Naive thymus-derived CD8-positive, alpha-beta T cell (primary cell): ENCODE measurements at regions of chr2 and their contacts with region 1.

Region 1: DNA sequence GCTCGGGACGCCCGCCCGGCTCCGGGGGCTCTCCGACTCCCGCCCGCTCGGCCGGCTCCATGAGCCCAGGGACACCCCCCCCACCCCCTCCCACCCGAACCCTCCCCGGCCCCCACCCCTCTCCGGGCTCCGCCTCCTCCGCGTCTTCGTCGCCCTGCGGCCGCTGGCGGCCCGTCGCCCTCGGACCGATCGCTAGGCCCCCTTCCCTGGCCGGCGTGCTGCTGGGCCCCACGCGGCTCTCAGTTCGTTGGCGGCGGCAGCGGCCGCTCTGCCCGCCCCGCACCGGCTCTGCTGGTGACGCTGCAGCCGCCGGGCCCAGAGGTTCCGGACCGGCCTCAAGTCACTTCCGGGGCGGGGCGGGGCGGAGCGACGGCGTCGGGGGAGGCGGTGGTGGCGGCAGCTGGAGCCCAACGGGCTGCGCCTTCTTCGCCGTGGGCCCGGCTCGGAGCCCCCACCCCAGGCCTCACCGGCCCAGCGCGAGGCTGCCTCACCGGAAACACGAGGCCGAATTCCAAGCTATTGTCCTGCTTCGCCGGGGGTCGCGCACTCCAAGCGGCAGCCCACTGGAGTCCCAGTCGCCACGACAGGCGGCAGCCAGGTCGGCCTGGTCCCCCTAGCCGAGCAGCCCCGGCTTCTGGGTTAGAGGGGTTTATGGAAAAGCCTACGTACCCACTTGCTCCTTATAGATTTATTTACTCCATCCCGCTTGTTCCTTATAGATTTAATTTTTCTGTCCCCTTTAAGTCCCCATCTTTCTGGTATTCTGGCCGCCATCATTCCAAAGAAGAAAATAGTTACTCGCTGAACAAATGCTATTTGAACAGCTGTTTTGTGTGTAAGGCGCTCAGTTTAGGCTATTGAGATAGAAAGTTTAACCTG is at the start of gene PSME4:
- DNase-seq: peak; percentile 86 to 96 (median 91)
- ATAC-seq: peak; percentile 89 to 90
- H3K4me3 Mint-ChIP-seq: peak within 1 kb of the TSS; percentile 86 to 100 (median 96)
- H3K27ac Mint-ChIP-seq: peak within 1 kb of the TSS; percentile 88 to 99 (median 96)
- H3K4me1 Mint-ChIP-seq: peaks cover 34 to 67% (median 61%) of the 10 kb centered on the region in 4 donors
- H3K27me3 Mint-ChIP-seq: no peaks in the 10 kb centered on the region
- polyA plus RNA-seq, gene PSME4: 3.5 to 4.3 (median 3.8) TPM

Region 2: DNA sequence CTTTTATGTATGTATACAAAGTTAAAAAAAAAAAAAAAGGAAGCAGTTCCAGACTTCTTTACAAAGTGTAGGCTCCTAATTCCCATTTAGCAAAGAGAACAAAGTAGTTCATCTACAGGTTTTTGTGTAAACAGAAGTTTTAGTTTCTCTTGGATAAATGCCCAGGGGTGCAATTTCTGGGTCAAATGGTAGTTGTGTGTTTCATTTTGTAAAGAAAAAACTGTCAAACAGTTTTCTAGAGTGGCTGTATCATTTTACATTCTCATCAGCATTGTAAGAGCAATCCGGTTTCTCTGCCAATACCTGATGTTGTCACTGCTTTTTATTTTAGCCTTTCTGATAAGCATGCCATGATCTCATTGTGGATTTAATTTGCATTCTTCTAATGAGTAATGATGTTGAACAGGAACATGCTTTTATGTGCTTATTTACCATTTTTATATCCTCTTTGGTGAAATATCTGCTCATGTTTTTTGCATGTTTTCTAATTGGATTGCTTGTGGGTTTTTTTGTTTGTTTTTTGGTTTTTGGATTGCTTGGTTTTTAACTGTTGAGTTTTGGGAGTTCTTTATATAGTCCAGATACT is 16.5 kb after region 1 on chr2:
- POLR2A ChIA-PET with region 1: interaction called, 11 read pairs
- DNase-seq: no peak
- ATAC-seq: no peak
- H3K4me3 Mint-ChIP-seq: peak overlapping the region in 1 of 10 donors; percentile 12
- H3K27ac Mint-ChIP-seq: peak overlapping the region; percentile 37 to 91 (median 81)
- H3K4me1 Mint-ChIP-seq: peaks cover 13 to 40% (median 35%) of the 10 kb centered on the region in 4 donors
- H3K27me3 Mint-ChIP-seq: no peaks in the 10 kb centered on the region

Region 3: DNA sequence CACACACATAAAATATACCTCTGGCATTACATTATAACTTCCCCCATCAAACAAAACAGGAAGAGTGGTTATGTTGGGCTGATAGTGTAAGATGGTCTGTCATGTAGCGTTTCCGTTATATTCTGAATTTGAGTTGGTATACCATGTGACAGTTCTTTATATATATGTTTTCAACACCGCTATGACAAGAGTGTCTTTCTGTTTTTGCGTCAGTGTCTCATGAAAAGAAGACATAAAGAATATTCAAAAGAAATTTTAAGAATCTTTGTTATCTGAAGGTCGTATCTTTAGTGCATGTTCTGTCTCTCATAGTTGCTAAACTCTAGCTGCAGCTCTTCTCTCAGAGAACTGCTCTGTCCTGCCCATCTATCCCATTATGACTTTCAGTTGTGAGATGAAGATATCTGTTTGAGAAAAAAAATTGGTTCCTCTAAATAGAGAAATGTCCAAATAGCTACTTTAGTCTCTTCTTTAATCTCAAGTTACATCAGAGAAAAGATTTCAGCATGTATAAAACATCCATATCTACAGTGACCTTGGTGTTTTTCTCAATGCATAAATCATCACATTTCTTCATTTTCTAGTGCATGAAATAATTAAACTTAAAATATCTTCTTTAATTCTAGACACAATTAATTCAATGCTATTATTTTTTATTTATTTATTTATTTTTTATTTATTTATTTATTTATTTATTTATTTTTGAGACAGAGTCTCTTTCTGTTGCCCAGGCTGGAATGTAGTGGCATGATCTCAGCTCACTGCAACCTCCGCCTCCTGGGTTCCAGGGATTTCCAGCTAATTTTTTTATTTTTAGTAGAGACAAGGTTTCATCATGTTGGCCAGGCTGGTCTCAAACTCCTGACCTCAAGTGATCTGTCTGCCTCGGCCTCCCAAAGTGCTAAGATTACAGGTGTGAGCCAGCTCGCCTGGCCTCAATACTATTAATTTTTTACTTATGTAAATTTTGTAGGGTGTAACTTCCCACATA is 24.1 kb after region 1 on chr2:
- POLR2A ChIA-PET with region 1: interaction called, 46 read pairs
- DNase-seq: peak in 4 of 10 donors; percentile 41 to 89 (median 83)
- ATAC-seq: peak; percentile 94 to 96
- H3K4me3 Mint-ChIP-seq: peak overlapping the region; percentile 63 to 83 (median 71)
- H3K27ac Mint-ChIP-seq: peak overlapping the region; percentile 84 to 99 (median 95)
- H3K4me1 Mint-ChIP-seq: peaks cover 14 to 37% (median 34%) of the 10 kb centered on the region in 4 donors
- H3K27me3 Mint-ChIP-seq: no peaks in the 10 kb centered on the region

Region 4: DNA sequence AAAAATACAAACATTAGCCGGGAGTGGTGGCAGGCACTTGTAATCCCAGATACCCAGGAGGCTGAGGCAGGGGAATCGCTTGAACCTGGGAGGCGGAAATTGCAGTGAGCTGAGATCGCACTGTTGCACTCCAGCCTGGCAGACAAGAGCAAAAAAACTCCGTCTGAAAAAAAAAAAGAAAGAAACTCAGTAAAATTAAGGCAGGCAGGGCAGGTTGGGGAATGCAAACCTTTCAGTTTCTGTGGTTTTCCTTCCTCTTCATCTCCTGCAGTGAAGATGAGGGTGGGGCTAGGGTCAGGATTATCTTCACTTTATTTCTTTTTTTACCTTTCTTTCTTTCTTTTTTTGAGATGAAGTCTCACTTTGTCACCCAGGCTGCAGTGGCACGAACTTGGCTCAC is 43.0 kb after region 1 on chr2:
- POLR2A ChIA-PET with region 1: interaction called, 24 read pairs
- DNase-seq: peak in 3 of 10 donors; percentile 40 to 42 (median 42)
- ATAC-seq: peak; percentile 78 to 80
- H3K4me3 Mint-ChIP-seq: peak overlapping the region; percentile 52 to 84 (median 76)
- H3K27ac Mint-ChIP-seq: peak overlapping the region; percentile 85 to 97 (median 94)
- H3K4me1 Mint-ChIP-seq: peaks cover 23 to 55% (median 51%) of the 10 kb centered on the region in 4 donors
- H3K27me3 Mint-ChIP-seq: no peaks in the 10 kb centered on the region

Region 5: DNA sequence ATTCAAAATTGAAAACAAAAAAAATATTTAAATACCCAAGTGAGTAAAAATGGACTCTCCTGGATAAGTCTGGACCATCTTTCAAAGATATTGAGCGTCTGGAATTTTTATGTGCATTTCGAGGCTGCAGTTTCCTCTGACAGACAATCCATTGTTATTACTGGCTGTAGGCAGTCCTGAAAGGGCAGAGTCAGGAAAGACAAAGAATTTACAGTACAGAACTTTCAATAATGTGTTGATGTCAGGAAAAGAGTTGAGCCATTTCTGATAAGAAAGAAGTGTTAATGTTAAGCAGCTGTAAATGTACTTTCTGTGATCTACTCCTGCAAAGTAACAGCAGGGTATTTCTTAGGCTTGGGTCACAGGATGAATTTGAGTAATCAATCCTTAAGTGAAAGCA is 255.3 kb after region 1 on chr2:
- POLR2A ChIA-PET with region 1: no interaction called
- DNase-seq: no peak
- ATAC-seq: no peak
- H3K4me3 Mint-ChIP-seq: no peak overlapping the region
- H3K27ac Mint-ChIP-seq: no peak overlapping the region
- H3K4me1 Mint-ChIP-seq: peaks cover 0 to 3% (median 0%) of the 10 kb centered on the region in 4 donors
- H3K27me3 Mint-ChIP-seq: no peaks in the 10 kb centered on the region